ENCODE measurements at regions of chr10 and their contacts with region 1.

Region 1: DNA sequence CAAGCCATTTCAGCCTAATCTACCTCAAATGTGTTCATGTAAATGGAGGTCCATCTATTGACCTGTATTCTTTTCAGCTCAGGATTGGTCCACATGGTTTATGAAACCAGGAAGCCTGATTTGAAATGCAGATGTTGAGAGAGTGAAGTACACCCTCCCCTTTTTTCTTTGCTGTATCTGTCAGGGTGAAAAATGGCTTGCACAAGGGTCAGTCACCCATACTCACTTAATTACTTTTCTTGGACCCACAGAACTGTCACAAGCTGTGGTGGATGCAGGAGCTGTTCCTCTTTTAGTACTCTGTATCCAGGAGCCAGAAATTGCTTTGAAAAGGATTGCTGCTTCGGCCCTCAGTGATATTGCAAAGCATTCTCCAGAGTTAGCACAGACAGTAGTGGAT is 41.2 kb downstream of the SPAG6 start:
- DNase-seq: no peak
- H3K4me3 ChIP-seq: no peak overlapping the region
- H3K27ac ChIP-seq: no peak overlapping the region
- H3K4me1 ChIP-seq: no peaks in the 10 kb centered on the region
- CTCF ChIP-seq: no peak

Region 2: GRCh38 chr10:23368816-23369640 is 982.5 kb after region 1 on chr10:
- CTCF ChIA-PET with region 1: no interaction called
- POLR2A ChIA-PET with region 1: no interaction called
- intact Hi-C with region 1: loop called (anchors 10 kb)
- DNase-seq: peak; percentile 87
- H3K4me3 ChIP-seq: peak overlapping the region; percentile 54
- H3K27ac ChIP-seq: peak overlapping the region; percentile 80
- H3K4me1 ChIP-seq: peaks cover 38% of the 10 kb centered on the region
- CTCF ChIP-seq: no peak